ENCODE measurements at regions of chr12 and their contacts with region 1.

Region 1: GRCh38 chr12:51531978-51532497 is 59.0 kb upstream of the SCN8A start:
- DNase-seq: peak; percentile 76
- ATAC-seq: peak; percentile 92
- H3K4me3 ChIP-seq: no peak overlapping the region
- H3K27ac ChIP-seq: no peak overlapping the region
- H3K4me1 ChIP-seq: peaks cover 5% of the 10 kb centered on the region; the same call in 1 of the 2 replicates
- H3K27me3 ChIP-seq: no peaks in the 10 kb centered on the region
- CTCF ChIP-seq: peak; percentile 89
- POLR2A ChIP-seq: no peak
- RAD21 ChIP-seq: peak; percentile 90

Region 2: GRCh38 chr12:51217968-51218606 is 314.0 kb before region 1 on chr12 and contains the start of gene POU6F1:
- CTCF ChIA-PET with region 1: no interaction called
- POLR2A ChIA-PET with region 1: no interaction called
- dilution Hi-C with region 1: no loop called
- in situ Hi-C with region 1: no loop called
- intact Hi-C with region 1: no loop called
- DNase-seq: peak; percentile 76
- ATAC-seq: peak; percentile 92
- H3K4me3 ChIP-seq: peak within 1 kb of the TSS; percentile 77
- H3K27ac ChIP-seq: peak within 1 kb of the TSS; percentile 83
- H3K4me1 ChIP-seq: peaks cover 4% of the 10 kb centered on the region
- H3K27me3 ChIP-seq: no peaks in the 10 kb centered on the region
- CTCF ChIP-seq: peak; percentile 51
- POLR2A ChIP-seq: peak; percentile 61; the same call in 1 of the 2 replicates
- RAD21 ChIP-seq: no peak; the same call in 1 of the 2 replicates
- total RNA-seq, gene POU6F1: 0.90 and 1.9 TPM in 2 replicates

Region 3: GRCh38 chr12:51678086-51678724 is 146.2 kb after region 1 on chr12:
- CTCF ChIA-PET with region 1: no interaction called
- POLR2A ChIA-PET with region 1: no interaction called
- dilution Hi-C with region 1: no loop called
- in situ Hi-C with region 1: no loop called
- intact Hi-C with region 1: loop called (anchors 5 kb)
- DNase-seq: peak; percentile 67
- ATAC-seq: peak; percentile 94
- H3K4me3 ChIP-seq: no peak overlapping the region
- H3K27ac ChIP-seq: no peak overlapping the region
- H3K4me1 ChIP-seq: no peaks in the 10 kb centered on the region
- H3K27me3 ChIP-seq: no peaks in the 10 kb centered on the region
- CTCF ChIP-seq: peak; percentile 68
- POLR2A ChIP-seq: no peak
- RAD21 ChIP-seq: peak; percentile 73

Region 4: DNA sequence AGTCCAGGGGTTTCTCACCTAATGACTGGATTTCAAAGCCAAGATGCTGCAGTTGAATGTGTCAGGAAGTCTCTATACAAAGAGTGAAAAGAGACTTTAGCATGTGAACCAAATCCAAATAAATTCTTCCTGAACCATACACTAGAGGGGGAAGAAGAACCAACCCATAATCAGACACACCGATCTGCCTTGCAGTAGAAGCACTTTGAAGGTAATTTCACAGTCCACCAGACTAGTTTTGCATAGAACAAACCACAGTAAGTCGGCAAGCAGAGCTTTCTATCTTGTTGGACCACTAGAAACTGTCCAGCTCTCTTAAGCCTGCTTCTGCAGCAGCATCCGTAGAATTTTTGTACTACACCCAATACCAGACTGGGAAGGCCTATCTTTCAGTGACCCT is 277.2 kb after region 1 on chr12:
- CTCF ChIA-PET with region 1: no interaction called
- POLR2A ChIA-PET with region 1: no interaction called
- dilution Hi-C with region 1: no loop called
- in situ Hi-C with region 1: loop called (anchors 10 kb)
- intact Hi-C with region 1: loop called (anchors 2 kb)
- DNase-seq: no peak
- ATAC-seq: no peak
- H3K4me3 ChIP-seq: no peak overlapping the region
- H3K27ac ChIP-seq: no peak overlapping the region
- H3K4me1 ChIP-seq: 0 out of 2 replicates have a peak, but pooled peaks cover 1% of the 10 kb centered on the region
- H3K27me3 ChIP-seq: no peaks in the 10 kb centered on the region
- CTCF ChIP-seq: no peak
- POLR2A ChIP-seq: no peak
- RAD21 ChIP-seq: no peak

Region 5: DNA sequence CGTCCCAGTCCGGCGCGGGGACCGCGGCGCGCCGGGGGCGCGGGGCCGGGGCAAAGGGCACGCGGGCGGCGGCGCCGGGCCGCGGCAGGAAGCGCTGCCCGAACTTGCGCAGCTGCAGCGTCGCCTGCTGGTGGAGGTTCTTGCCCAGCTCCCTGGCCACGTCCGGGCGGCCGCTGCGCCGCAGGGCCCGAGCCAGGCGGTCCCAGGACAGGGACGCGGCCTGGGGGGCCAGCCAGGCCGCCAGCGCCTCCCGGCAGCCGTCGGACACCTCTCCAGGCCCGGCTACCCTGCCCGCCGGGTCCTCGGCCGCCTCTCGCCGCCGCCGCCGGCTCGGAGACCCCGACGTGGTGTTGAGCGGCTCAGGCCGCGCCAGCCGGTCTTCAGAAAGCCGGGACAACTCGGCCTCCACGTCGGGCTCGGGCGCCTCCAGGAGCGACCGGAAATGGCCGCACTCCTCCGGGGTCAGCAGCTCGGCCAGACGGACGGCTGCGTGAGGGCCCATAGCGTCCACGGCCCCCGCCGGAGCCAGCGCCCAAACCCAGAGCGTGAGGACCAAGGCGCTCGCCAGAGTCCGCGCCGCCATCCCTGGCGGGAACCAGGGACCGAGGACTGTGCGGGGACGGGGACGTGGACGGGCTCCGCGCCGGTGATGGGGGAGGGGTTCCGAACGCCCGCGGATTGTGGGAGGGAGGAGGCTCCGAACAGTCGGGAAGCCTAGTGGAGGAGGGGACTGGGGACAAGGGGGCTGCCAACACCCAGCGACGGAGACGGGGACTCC is 282.5 kb after region 1 on chr12:
- CTCF ChIA-PET with region 1: no interaction called
- POLR2A ChIA-PET with region 1: no interaction called
- dilution Hi-C with region 1: no loop called
- in situ Hi-C with region 1: loop called (anchors 10 kb)
- intact Hi-C with region 1: loop called (anchors 2 kb)
- DNase-seq: peak; percentile 66
- ATAC-seq: peak; percentile 88
- H3K4me3 ChIP-seq: peak overlapping the region; percentile 54
- H3K27ac ChIP-seq: no peak overlapping the region; the same call in 1 of the 2 replicates
- H3K4me1 ChIP-seq: peaks cover 8% of the 10 kb centered on the region; the same call in 1 of the 2 replicates
- H3K27me3 ChIP-seq: no peaks in the 10 kb centered on the region; the same call in 1 of the 2 replicates
- CTCF ChIP-seq: peak; percentile 70
- POLR2A ChIP-seq: no peak
- RAD21 ChIP-seq: peak; percentile 72

Region 6: DNA sequence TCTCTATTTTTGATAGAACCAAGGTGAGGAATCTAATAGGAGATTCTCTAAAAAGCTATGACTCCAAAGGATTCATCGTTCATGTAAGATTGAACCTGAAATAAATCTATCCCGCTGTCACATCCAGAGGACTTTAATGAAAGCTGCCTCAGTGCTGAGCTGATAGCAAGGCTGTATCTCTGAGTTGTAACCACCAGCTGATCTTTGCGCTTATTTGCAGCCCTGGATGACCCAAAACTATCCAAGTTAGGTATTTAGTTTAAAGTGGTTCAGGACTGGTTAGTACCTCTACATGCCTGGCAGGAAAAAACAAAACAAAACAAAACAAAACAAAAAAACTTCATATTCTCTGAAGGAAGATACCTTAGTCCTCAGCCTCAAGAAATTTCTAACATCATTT is 347.1 kb after region 1 on chr12:
- CTCF ChIA-PET with region 1: interaction called, 4 read pairs
- POLR2A ChIA-PET with region 1: no interaction called
- dilution Hi-C with region 1: no loop called
- in situ Hi-C with region 1: no loop called
- intact Hi-C with region 1: loop called (anchors 5 kb)
- DNase-seq: no peak
- ATAC-seq: no peak
- H3K4me3 ChIP-seq: no peak overlapping the region
- H3K27ac ChIP-seq: no peak overlapping the region
- H3K4me1 ChIP-seq: no peaks in the 10 kb centered on the region
- H3K27me3 ChIP-seq: no peaks in the 10 kb centered on the region
- CTCF ChIP-seq: no peak
- POLR2A ChIP-seq: no peak
- RAD21 ChIP-seq: no peak

Measured in IMR-90 (cell line).